Activated naive CD4-positive, alpha-beta T cell treated with anti-CD3 and anti-CD28 coated beads for 36 hours (primary cell): ENCODE measurements at regions of chr9 and their contacts with region 1.

Region 1: DNA sequence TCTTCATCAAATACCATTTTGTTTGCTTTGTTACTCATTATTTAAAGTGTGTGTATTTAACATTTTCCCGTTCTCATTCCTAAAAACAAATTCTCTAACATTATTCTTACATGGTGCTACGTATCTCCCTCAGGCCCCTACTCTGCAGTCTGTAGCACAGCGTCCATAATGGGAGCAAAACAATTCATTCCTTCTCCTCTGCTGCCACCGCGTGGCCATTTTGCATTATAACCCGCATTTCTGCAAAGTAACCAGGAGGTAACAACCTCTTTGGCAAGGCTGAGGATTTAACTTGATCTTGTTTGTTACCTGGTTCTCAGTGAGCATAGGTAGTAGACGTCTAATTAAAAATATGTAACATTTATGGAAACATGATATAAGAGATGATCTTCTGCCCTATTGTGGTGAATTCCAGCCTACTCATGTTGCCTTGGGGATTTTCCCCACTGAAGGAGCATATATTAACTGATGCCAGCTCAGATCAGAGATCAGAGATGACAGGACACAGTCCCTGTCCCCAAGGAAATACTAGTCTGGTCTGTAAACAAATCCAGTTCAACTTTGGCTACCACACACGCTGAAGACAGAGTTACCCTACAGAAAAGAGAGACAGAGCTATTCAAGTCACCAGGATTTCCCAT is 10.5 kb downstream of the OR1K1 start:
- DNase-seq: peak; percentile 87
- H3K4me3 Mint-ChIP-seq: no peak overlapping the region
- H3K27ac Mint-ChIP-seq: no peak overlapping the region
- H3K4me1 Mint-ChIP-seq: peaks cover 20% of the 10 kb centered on the region
- H3K27me3 Mint-ChIP-seq: no peaks in the 10 kb centered on the region

Region 2: GRCh38 chr9:122099271-122099869 is 711.1 kb before region 1 on chr9:
- CTCF ChIA-PET with region 1: interaction called, 4 read pairs
- intact Hi-C with region 1: loop called (anchors 1 kb)
- DNase-seq: peak; percentile 85
- H3K4me3 Mint-ChIP-seq: peak overlapping the region; percentile 41
- H3K27ac Mint-ChIP-seq: no peak overlapping the region
- H3K4me1 Mint-ChIP-seq: peaks cover 9% of the 10 kb centered on the region
- H3K27me3 Mint-ChIP-seq: peaks cover 4% of the 10 kb centered on the region

Region 3: DNA sequence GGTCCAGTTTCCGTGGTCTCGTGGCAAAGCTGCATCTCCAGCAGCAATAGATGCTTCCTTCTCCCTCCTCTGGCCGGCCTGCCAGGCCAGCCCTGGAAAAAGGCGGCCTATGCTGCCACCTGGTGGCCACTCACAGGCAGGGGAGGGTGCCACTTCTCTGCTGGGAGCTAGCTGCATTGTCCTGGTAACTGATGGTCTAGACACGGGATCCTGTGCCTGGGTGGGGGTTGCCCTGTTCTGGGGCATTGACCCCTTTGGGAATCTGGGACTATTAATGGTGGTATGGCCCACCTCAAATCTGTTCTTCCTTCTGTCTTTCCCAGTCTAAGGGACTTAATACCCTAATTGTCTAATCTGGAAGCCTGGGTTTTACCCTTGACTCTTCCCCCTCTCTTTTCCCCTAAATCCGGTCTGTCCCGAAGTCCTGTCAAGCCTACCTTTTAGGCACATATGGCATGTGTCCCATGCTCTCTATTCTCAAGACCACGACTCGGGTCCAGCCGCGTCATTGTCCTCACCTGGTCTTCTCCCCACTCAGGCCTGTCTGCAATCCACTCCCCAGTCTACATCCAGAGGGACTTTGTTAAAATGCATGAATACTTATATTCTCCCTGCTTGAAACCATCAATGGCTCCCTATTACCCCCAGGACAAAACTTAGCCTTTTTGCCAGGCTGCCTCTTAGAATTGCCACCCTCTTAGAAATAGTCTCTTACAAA is 459.6 kb before region 1 on chr9:
- CTCF ChIA-PET with region 1: interaction called, 3 read pairs
- intact Hi-C with region 1: loop called (anchors 10 kb)
- DNase-seq: peak; percentile 82
- H3K4me3 Mint-ChIP-seq: no peak overlapping the region
- H3K27ac Mint-ChIP-seq: no peak overlapping the region
- H3K4me1 Mint-ChIP-seq: peaks cover 2% of the 10 kb centered on the region
- H3K27me3 Mint-ChIP-seq: peaks cover 29% of the 10 kb centered on the region

Region 4: GRCh38 chr9:122370869-122371755 is 439.3 kb before region 1 on chr9 and contains the start of gene PTGS1:
- CTCF ChIA-PET with region 1: no interaction called
- intact Hi-C with region 1: loop called (anchors 10 kb)
- DNase-seq: no peak
- H3K4me3 Mint-ChIP-seq: peak within 1 kb of the TSS; percentile 29
- H3K27ac Mint-ChIP-seq: no peak within 1 kb of the TSS
- H3K4me1 Mint-ChIP-seq: peaks cover 7% of the 10 kb centered on the region
- H3K27me3 Mint-ChIP-seq: peaks cover 35% of the 10 kb centered on the region
- total RNA-seq, gene PTGS1: not detected

Region 5: DNA sequence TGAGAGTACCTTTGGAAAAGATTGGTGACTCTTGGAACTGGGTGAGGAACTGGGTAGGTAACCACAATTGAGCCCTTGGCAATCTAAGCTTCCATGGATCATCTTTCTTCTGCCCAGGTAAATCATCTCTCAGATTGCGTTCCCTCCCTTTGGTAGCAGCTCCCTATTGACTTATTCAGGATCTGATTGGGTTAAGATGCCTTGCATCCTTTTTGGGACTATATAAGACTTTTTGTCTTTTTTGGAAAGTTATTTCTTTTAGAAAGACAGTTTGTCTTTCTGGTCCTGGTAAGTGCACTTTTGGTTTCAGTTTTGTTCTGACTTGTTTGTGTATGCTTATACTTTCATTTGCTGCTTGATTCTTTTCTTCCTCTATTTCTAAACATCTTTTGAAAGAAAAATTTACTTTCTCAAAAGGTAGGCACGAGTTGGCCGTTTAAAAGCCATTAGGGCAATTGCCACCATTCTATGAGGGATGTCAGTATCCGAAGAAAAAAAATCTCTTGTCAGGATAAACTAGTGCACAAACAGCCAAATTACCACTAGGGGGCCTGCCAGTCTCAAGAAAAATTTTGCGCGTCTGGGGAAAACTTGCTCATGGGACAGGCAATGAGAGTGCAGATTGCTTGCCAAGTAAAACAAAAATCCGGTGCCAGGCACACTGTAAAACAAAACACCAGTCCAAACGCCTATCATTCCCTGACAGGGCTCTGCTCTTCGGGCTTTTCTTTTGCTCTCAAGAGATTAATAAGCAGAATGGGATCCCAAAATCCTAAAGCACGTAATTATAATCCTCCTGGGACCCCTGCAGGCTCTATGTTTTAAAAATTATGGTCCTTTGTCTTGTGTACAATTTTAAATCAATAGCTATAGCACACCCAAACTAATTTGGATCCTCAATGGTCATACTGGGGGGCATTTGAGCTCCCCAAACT is 345.5 kb before region 1 on chr9:
- CTCF ChIA-PET with region 1: interaction called, 57 read pairs
- intact Hi-C with region 1: loop called (anchors 1 kb)
- DNase-seq: peak; percentile 83
- H3K4me3 Mint-ChIP-seq: peak overlapping the region; percentile 72
- H3K27ac Mint-ChIP-seq: peak overlapping the region; percentile 68
- H3K4me1 Mint-ChIP-seq: peaks cover 11% of the 10 kb centered on the region
- H3K27me3 Mint-ChIP-seq: peaks cover 17% of the 10 kb centered on the region

Region 6: DNA sequence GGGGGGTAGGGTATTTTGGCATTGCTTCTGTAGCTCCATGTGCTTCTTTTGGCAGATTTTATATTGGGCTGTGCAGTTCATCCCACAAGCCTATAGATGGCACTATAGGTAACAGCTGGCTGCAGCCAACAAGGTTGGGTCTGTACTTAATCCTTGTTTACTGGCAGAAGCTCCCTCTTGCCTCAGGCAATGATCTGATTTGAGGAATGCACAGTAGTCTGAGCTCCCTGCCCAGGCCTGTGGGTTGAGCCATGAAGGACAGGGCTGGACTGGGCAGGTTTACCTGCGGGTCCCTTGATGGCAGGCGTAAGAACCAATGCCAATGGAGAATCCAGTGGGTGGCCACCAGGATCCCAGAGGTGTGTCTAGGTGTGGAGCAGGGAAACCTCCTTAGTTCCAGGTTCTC is 311.5 kb before region 1 on chr9:
- CTCF ChIA-PET with region 1: interaction called, 18 read pairs
- intact Hi-C with region 1: loop called (anchors 1 kb)
- DNase-seq: peak; percentile 38
- H3K4me3 Mint-ChIP-seq: no peak overlapping the region
- H3K27ac Mint-ChIP-seq: no peak overlapping the region
- H3K4me1 Mint-ChIP-seq: no peaks in the 10 kb centered on the region
- H3K27me3 Mint-ChIP-seq: peaks cover 16% of the 10 kb centered on the region

Region 7: GRCh38 chr9:122609806-122610205 is 200.6 kb before region 1 on chr9:
- CTCF ChIA-PET with region 1: interaction called, 3 read pairs
- intact Hi-C with region 1: loop called (anchors 1 kb)
- DNase-seq: no peak
- H3K4me3 Mint-ChIP-seq: no peak overlapping the region
- H3K27ac Mint-ChIP-seq: no peak overlapping the region
- H3K4me1 Mint-ChIP-seq: no peaks in the 10 kb centered on the region
- H3K27me3 Mint-ChIP-seq: peaks cover 5% of the 10 kb centered on the region